Naive thymus-derived CD4-positive, alpha-beta T cell (primary cell): ENCODE measurements at regions of chrX and their contacts with region 1.

Region 1: GRCh38 chrX:24024819-24025740 is 1.9 kb downstream of the KLHL15 start:
- DNase-seq: peak; percentile 68 to 82 (median 76)
- ATAC-seq: peak; percentile 96
- H3K4me3 ChIP-seq: peak overlapping the region; percentile 74
- H3K4me3 Mint-ChIP-seq: peak overlapping the region; percentile 71 to 94 (median 86)
- H3K27ac ChIP-seq: peak overlapping the region; percentile 96
- H3K27ac Mint-ChIP-seq: peak overlapping the region in 7 of 9 donors; percentile 48 to 92 (median 85)
- H3K4me1 ChIP-seq: no peaks in the 10 kb centered on the region
- H3K4me1 Mint-ChIP-seq: peaks cover 7 to 38% (median 27%) of the 10 kb centered on the region in 7 donors
- H3K27me3 ChIP-seq: no peaks in the 10 kb centered on the region
- H3K27me3 Mint-ChIP-seq: peaks cover 0 to 3% (median 0%) of the 10 kb centered on the region in 5 donors

Region 2: GRCh38 chrX:23434356-23434884 is 590.7 kb before region 1 on chrX:
- CTCF ChIA-PET with region 1: no interaction called
- POLR2A ChIA-PET with region 1: no interaction called
- intact Hi-C with region 1: no loop called
- DNase-seq: no peak
- ATAC-seq: no peak
- H3K4me3 ChIP-seq: no peak overlapping the region
- H3K4me3 Mint-ChIP-seq: no peak overlapping the region
- H3K27ac ChIP-seq: no peak overlapping the region
- H3K27ac Mint-ChIP-seq: no peak overlapping the region
- H3K4me1 ChIP-seq: no peaks in the 10 kb centered on the region
- H3K4me1 Mint-ChIP-seq: no peaks in the 10 kb centered on the region
- H3K27me3 ChIP-seq: no peaks in the 10 kb centered on the region
- H3K27me3 Mint-ChIP-seq: peaks cover 0 to 9% (median 3%) of the 10 kb centered on the region in 5 donors

Region 3: DNA sequence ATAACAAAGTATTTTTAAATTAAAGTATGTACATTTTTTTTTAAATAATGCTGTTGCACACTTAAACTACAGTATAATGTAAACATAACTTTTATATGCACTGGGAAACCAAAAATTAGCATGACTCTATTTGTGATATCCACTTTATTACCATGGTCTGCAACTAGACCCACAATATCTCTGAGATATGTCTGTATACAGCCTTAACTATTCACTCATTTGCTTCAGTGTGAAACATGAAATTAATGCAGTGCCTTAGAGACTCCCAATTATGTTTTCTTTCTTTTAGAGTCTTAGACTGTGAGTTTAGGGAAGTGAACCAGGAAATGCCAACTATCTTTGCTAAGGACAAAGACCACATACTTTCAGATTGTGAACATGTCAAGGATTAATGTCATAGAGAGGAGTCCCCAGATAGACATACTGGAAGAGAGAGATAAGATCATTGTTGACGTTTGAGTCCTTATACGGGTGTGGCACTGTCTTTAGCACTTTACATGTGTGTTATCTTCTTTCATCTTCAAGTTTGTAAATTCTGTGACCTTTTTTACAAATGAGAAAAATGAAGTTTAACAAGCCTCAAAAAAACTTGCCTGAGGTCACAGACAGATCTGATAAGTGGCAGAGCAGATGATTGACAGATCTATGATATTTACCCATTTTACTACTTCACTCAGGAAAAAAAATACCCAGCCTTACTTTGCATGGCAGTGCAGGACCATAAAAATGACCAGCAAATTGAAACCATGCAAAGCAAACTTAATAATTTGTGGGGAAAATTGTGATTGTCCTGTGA is 94.0 kb before region 1 on chrX:
- CTCF ChIA-PET with region 1: no interaction called
- POLR2A ChIA-PET with region 1: no interaction called
- intact Hi-C with region 1: loop called in 1 of 2 experiments (anchors 2 kb)
- DNase-seq: peak in 7 of 9 donors; percentile 10 to 58 (median 32)
- ATAC-seq: peak; percentile 83
- H3K4me3 ChIP-seq: no peak overlapping the region
- H3K4me3 Mint-ChIP-seq: peak overlapping the region in 9 of 10 donors; percentile 12 to 68 (median 48)
- H3K27ac ChIP-seq: peak overlapping the region; percentile 57
- H3K27ac Mint-ChIP-seq: peak overlapping the region in 8 of 9 donors; percentile 65 to 91 (median 84)
- H3K4me1 ChIP-seq: peaks cover 4 to 10% of the 10 kb centered on the region in 2 donors
- H3K4me1 Mint-ChIP-seq: peaks cover 4 to 21% (median 17%) of the 10 kb centered on the region in 7 donors
- H3K27me3 ChIP-seq: no peaks in the 10 kb centered on the region
- H3K27me3 Mint-ChIP-seq: no peaks in the 10 kb centered on the region

Region 4: GRCh38 chrX:23952984-23953907 is 71.8 kb before region 1 on chrX:
- CTCF ChIA-PET with region 1: no interaction called
- POLR2A ChIA-PET with region 1: interaction called, 15 read pairs
- intact Hi-C with region 1: loop called (anchors 1 kb)
- DNase-seq: peak in 8 of 9 donors; percentile 31 to 63 (median 46)
- ATAC-seq: peak; percentile 93
- H3K4me3 ChIP-seq: peak overlapping the region; percentile 84
- H3K4me3 Mint-ChIP-seq: peak overlapping the region; percentile 72 to 97 (median 88)
- H3K27ac ChIP-seq: peak overlapping the region; percentile 80
- H3K27ac Mint-ChIP-seq: peak overlapping the region; percentile 78 to 99 (median 91)
- H3K4me1 ChIP-seq: peaks cover 0 to 12% of the 10 kb centered on the region in 2 donors
- H3K4me1 Mint-ChIP-seq: peaks cover 7 to 55% (median 20%) of the 10 kb centered on the region in 7 donors
- H3K27me3 ChIP-seq: no peaks in the 10 kb centered on the region
- H3K27me3 Mint-ChIP-seq: no peaks in the 10 kb centered on the region

Region 5: DNA sequence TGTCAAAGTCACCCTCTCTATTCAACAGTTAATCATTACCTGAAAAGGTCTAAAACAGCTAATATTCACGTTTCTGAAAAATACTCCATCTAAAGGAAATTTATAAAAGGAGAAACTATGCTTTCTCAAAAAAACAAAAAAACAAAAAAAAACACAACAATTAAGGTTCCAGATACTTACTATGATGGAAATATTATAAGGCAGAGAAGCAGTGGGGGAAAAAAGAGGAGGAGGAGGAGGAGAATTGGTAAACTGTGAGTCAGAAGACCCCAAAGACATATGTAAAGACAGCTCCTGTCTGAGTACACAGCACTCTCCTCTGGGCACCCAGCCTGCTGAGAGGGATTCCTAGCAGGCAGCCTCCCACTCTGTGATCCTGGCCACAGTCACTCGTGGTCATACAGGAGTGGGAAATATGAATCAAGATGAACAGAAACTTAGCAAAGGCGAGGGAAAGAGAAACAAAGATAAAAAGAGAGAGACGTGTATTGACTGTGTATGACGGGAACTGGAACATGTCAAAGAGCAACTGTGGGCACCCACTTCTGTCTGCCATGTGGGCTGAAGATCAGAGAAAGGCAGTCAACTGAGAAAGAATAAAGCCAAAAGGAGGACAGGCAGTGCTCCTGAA is 10.6 kb before region 1 on chrX:
- CTCF ChIA-PET with region 1: interaction called, 4 read pairs
- POLR2A ChIA-PET with region 1: no interaction called
- intact Hi-C with region 1: loop called in 1 of 2 experiments (anchors 1 kb)
- DNase-seq: peak in 7 of 9 donors; percentile 10 to 47 (median 20)
- ATAC-seq: peak; percentile 65
- H3K4me3 ChIP-seq: no peak overlapping the region
- H3K4me3 Mint-ChIP-seq: peak overlapping the region in 9 of 10 donors; percentile 39 to 79 (median 69)
- H3K27ac ChIP-seq: no peak overlapping the region
- H3K27ac Mint-ChIP-seq: peak overlapping the region; percentile 4 to 92 (median 81)
- H3K4me1 ChIP-seq: peaks cover 0 to 3% of the 10 kb centered on the region in 2 donors
- H3K4me1 Mint-ChIP-seq: peaks cover 18 to 42% (median 36%) of the 10 kb centered on the region in 7 donors
- H3K27me3 ChIP-seq: no peaks in the 10 kb centered on the region
- H3K27me3 Mint-ChIP-seq: no peaks in the 10 kb centered on the region

Region 6: DNA sequence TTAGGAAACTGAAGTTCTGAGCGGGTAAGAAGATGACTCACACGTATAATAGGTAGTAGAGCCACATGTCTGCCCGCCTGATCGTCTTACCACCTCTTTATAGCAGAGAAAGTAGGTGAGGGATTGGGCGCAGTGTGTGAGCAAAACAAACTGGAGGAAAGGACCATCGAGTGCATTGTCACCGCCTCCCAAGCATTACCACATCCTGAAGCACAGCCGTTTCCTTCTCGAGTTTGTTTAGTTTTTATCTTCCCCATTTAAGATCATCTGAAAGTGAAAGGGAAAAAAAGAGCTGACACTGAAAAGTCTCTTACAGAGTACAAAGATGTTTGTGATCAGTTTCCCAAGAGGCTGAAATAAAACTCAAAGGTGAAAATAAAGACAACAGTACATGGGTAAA is 454.8 kb after region 1 on chrX:
- CTCF ChIA-PET with region 1: no interaction called
- POLR2A ChIA-PET with region 1: no interaction called
- intact Hi-C with region 1: loop called in 1 of 2 experiments (anchors 10 kb)
- DNase-seq: peak in 8 of 9 donors; percentile 46 to 88 (median 82)
- ATAC-seq: peak; percentile 98
- H3K4me3 ChIP-seq: peak overlapping the region; percentile 34
- H3K4me3 Mint-ChIP-seq: peak overlapping the region; percentile 65 to 85 (median 76)
- H3K27ac ChIP-seq: peak overlapping the region; percentile 81
- H3K27ac Mint-ChIP-seq: peak overlapping the region; percentile 91 to 97 (median 95)
- H3K4me1 ChIP-seq: peaks cover 22 to 51% of the 10 kb centered on the region in 2 donors
- H3K4me1 Mint-ChIP-seq: peaks cover 16 to 92% (median 71%) of the 10 kb centered on the region in 7 donors
- H3K27me3 ChIP-seq: no peaks in the 10 kb centered on the region
- H3K27me3 Mint-ChIP-seq: no peaks in the 10 kb centered on the region